Naive thymus-derived CD4-positive, alpha-beta T cell (primary cell): ENCODE measurements at regions of chr5 and their contacts with region 1.

Region 1: GRCh38 chr5:129053438-129053837 is 41.1 kb upstream of the ISOC1 start:
- DNase-seq: no peak
- ATAC-seq: no peak
- H3K4me3 ChIP-seq: no peak overlapping the region
- H3K4me3 Mint-ChIP-seq: no peak overlapping the region
- H3K27ac ChIP-seq: no peak overlapping the region
- H3K27ac Mint-ChIP-seq: no peak overlapping the region
- H3K4me1 ChIP-seq: no peaks in the 10 kb centered on the region
- H3K4me1 Mint-ChIP-seq: no peaks in the 10 kb centered on the region
- H3K27me3 ChIP-seq: peaks cover 0 to 2% of the 10 kb centered on the region in 2 donors
- H3K27me3 Mint-ChIP-seq: peaks cover 0 to 41% (median 36%) of the 10 kb centered on the region in 5 donors

Region 2: GRCh38 chr5:128764911-128765310 is 288.5 kb before region 1 on chr5:
- CTCF ChIA-PET with region 1: no interaction called
- POLR2A ChIA-PET with region 1: no interaction called
- intact Hi-C with region 1: loop called in 1 of 2 experiments (anchors 10 kb)
- DNase-seq: no peak
- ATAC-seq: no peak
- H3K4me3 ChIP-seq: no peak overlapping the region
- H3K4me3 Mint-ChIP-seq: no peak overlapping the region
- H3K27ac ChIP-seq: no peak overlapping the region
- H3K27ac Mint-ChIP-seq: no peak overlapping the region
- H3K4me1 ChIP-seq: no peaks in the 10 kb centered on the region
- H3K4me1 Mint-ChIP-seq: no peaks in the 10 kb centered on the region
- H3K27me3 ChIP-seq: no peaks in the 10 kb centered on the region
- H3K27me3 Mint-ChIP-seq: no peaks in the 10 kb centered on the region